WTC11 (cell line): ENCODE measurements at regions of chr1 and their contacts with region 1.

Region 1: DNA sequence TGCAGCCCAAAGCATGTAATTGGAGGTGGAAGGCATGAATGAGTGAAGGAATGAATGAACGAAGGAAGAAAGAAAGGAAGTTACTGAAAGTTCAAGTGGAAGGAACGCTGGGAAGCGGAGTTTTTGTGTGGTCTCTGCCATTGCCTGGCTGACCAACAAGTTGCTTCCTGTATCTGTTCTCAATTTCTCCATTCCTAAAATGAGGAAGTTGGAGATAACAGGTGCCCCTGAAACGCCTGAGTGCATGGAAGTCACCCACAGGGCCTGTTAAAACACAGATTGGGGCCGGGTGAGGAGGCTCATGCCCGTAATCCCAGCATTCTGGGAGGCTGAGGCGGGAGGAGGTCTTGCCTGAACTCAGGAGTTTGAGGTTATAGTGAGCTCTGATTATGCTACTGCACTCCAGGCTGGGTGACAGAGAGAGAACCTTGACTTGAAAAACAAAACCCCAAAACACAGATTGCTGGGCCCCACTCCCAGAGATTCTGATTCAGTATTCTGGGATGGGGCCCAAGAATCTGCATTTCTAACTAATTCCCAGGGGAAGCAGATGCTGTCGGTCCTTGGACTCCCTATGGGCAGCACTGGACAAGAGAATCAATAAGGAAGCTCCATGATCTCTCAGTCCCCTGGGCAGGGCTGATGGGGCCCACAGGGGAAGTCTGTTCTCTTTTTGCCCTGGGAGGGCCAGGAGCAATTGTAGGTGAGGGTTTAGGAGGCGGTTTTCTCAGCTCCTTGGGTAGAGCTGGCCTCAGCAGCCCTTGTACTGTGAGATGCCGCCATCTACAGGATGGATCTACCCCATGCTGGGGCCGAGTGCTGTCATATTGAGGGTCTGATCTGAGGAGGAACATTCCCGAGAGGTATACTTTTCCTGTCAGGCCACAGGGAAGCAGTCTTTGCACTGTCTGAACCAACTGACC is 3.3 kb upstream of the CNR2 start:
- DNase-seq: peak; percentile 80
- ATAC-seq: peak; percentile 97
- H3K4me3 Mint-ChIP-seq: no peak overlapping the region
- H3K27ac Mint-ChIP-seq: no peak overlapping the region
- H3K4me1 Mint-ChIP-seq: peaks cover 6% of the 10 kb centered on the region
- H3K27me3 Mint-ChIP-seq: peaks cover 6% of the 10 kb centered on the region; the same call in 1 of the 2 replicates
- CTCF ChIP-seq: no peak

Region 2: GRCh38 chr1:23800400-23801337 is 115.8 kb before region 1 on chr1 and contains the start of gene GALE:
- CTCF ChIA-PET with region 1: interaction called, 24 read pairs
- POLR2A ChIA-PET with region 1: no interaction called
- DNase-seq: peak; percentile 80
- ATAC-seq: peak; percentile 48
- H3K4me3 Mint-ChIP-seq: peak within 1 kb of the TSS; percentile 96
- H3K27ac Mint-ChIP-seq: peak within 1 kb of the TSS; percentile 94
- H3K4me1 Mint-ChIP-seq: peaks cover 14% of the 10 kb centered on the region
- H3K27me3 Mint-ChIP-seq: peaks cover 17% of the 10 kb centered on the region
- CTCF ChIP-seq: no peak
- total RNA-seq, gene GALE: 30.3 to 36.6 TPM (median 35.8 TPM) in 3 replicates

Region 3: GRCh38 chr1:23964790-23965740 is 48.6 kb after region 1 on chr1:
- CTCF ChIA-PET with region 1: no interaction called
- POLR2A ChIA-PET with region 1: no interaction called
- DNase-seq: no peak
- ATAC-seq: no peak
- H3K4me3 Mint-ChIP-seq: no peak overlapping the region
- H3K27ac Mint-ChIP-seq: peak overlapping the region; percentile 80
- H3K4me1 Mint-ChIP-seq: peaks cover 13% of the 10 kb centered on the region
- H3K27me3 Mint-ChIP-seq: no peaks in the 10 kb centered on the region
- CTCF ChIP-seq: no peak

Region 4: GRCh38 chr1:24201941-24202440 is 285.5 kb after region 1 on chr1:
- CTCF ChIA-PET with region 1: no interaction called
- POLR2A ChIA-PET with region 1: no interaction called
- DNase-seq: peak; percentile 90
- ATAC-seq: peak; percentile 75
- H3K4me3 Mint-ChIP-seq: no peak overlapping the region
- H3K27ac Mint-ChIP-seq: no peak overlapping the region
- H3K4me1 Mint-ChIP-seq: 0 out of 2 replicates have a peak, but pooled peaks cover 2% of the 10 kb centered on the region
- H3K27me3 Mint-ChIP-seq: no peaks in the 10 kb centered on the region
- CTCF ChIP-seq: peak; percentile 79